ENCODE measurements at regions of chr22 and their contacts with region 1.

Region 1: GRCh38 chr22:35582861-35583670 is 34.1 kb downstream of the MB start:
- DNase-seq: peak; percentile 51 to 87 (median 72)

Region 2: DNA sequence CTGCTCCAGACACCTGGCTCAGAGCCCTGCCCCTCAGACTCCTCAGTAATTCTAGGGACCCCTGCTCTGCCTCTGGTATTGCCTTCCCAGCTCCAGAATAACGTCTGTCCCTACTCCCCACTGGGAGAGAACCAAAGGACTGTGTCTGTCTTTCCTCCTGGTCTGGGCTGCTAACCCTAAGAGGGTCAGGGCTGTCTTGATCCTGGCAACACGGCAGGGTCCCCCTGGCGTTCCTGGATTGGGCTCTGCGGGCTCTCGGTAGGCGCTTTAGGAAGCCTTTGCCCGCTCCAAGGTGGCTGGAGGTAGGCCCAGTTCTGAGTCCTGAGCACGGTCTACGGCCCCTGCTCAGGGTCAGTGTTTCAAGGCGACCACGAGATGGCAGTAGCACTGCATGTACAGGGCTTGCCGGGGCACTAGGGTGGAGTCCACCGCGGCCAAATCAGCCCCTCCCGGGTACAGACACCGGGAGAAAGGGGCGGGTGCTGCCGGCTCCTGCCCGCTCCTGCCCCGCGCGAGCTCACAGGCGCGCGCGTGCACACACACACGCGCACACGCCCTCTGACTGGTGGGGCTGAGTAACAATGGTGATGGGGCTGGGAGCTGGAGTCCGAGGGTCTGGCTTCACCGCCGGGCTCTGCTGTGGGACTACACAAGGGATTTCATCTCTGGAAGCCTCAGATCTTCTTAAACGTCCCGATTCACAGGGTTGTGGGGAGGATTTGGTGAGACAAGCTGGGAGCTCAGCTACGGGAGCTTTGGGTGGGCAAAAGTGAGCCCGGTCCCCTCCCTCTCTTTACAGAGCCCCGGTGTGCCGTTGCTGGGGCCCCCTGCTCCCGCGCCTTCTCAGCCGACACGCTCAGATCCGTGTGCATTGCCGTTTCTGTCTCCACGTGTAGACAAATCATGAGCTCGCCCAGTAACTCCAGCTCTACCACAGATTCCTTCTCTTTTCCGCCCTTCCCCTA is 232.2 kb before region 1 on chr22:
- intact Hi-C with region 1: loop called (anchors 2 kb)
- DNase-seq: peak; percentile 77 to 97 (median 91)

Region 3: DNA sequence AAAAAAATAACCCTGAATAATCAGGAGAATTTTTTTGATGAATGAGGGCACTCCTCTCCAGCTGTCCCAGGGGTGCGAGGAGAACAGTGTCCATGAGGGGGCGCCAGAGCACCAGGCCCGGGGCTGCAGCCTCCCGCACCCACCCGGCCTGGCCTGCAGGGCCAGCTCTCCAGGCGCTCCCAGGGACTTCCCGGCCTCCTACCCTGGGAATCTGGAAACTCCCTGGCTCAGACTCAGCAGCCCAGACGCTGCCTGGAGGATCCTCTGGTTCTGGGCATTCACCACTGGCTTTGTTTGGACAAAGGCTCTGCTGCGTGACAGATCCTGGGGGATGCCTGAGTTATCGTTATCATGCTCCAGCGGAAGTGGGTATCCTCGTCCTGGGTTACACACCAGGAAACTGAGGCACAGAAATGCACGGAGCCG is 152.2 kb before region 1 on chr22:
- intact Hi-C with region 1: loop called (anchors 1 kb)
- DNase-seq: peak; percentile 70 to 95 (median 90)

Region 4: GRCh38 chr22:35489239-35489638 is 93.8 kb before region 1 on chr22:
- intact Hi-C with region 1: no loop called
- DNase-seq: peak in 1 of 42 donors; percentile 7

Measured in head of caudate nucleus (tissue), 42 donors.